ENCODE measurements at regions of chr20 and their contacts with region 1.

Region 1: DNA sequence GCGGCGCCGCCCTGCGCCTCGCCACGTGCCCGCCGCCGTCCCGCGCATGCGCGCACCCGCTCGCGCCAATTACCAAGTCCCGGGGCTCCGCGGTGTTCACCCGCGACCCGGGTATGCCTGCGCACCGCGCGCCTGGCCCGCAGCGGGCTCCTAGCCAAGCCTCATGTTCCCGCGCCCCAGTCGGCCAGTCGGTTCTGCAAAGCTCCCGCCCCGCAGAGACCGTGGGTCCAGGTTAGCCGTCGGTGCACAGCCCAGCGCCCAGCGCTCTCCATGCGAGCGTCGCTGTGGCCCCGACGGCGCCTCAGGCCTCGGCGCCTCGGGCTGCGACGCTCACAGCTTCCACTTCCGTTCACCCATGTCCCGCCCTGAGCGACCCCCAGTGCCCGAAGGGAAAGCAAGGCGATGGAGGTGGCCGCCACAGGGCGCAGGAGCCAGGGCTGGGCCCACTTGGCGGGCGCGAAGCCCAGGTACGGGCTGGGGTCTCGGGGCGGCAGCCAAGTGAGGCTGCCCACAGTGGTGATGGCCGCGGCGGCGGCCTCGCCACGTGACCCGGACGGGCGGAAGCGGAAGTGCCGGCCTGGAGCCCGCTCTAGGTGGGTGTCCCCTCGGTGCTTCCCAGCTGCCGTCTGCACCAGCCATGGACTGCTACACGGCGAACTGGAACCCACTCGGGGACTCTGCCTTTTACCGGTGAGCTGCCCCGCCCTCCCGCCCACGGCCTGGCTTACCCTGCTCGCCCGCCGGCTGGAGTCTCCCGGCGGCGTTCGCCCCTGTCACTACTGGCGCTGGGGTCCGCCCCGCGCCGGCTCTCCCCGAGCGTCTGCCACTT is at the starts of genes PCED1A and VPS16:
- DNase-seq: peak; percentile 78 to 95 (median 89)
- ATAC-seq: peak; percentile 92
- H3K4me3 ChIP-seq: peak within 1 kb of the TSS; percentile 88 to 97
- H3K4me3 Mint-ChIP-seq: peak within 1 kb of the TSS; percentile 82
- H3K27ac ChIP-seq: peak within 1 kb of the TSS; percentile 85 to 88
- H3K27ac Mint-ChIP-seq: peak within 1 kb of the TSS; percentile 89
- H3K4me1 ChIP-seq: peaks cover 22% of the 10 kb centered on the region
- H3K4me1 Mint-ChIP-seq: peaks cover 41% of the 10 kb centered on the region
- H3K27me3 ChIP-seq: no peaks in the 10 kb centered on the region
- H3K27me3 Mint-ChIP-seq: no peaks in the 10 kb centered on the region
- CTCF ChIP-seq: no peak
- total RNA-seq, gene PCED1A: 58.7 to 62.2 TPM
- total RNA-seq, gene VPS16: 40.7 to 41.1 TPM

Region 2: DNA sequence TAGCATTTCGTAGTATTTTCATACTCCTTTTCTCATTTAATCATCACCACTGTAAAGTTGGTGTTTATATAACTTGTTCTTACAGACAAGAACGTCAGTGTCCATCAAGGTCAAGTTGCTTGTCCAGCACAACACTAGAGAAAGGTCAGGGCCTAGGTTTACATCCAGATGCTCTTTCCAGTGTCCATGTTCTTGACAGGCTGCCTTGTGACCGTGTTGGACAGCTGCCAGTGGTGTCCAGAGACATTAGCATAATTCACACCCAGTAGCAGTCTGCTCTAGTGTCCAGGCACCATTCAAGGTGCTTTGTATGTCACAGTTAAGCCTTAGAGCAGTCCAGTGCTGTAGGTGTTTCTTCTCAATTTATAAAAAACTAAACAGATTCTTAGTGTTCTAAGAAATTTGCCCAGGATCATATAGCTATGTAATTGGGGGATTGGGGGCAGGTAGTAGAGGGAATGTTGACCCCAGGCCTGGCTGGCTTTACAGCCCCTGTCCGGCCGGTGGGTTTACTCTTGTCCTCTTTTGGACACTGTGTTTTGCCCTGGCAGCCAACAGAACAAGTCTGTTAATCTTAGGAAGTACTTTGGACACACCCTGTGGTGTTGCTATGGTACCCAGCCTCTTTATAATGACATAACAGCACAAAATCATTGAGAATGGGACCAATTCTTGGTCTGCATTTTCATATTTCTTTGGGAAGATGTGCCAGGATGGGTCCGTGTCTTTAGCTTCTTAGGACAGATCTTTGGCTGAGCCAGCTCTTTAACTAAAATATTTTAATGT is 730.7 kb before region 1 on chr20:
- CTCF ChIA-PET with region 1: no interaction called
- POLR2A ChIA-PET with region 1: no interaction called
- intact Hi-C with region 1: loop called in 1 of 2 experiments (anchors 5 kb)
- DNase-seq: peak in 1 of 9 experiments; percentile 45
- ATAC-seq: no peak
- H3K4me3 ChIP-seq: no peak overlapping the region
- H3K4me3 Mint-ChIP-seq: peak overlapping the region; percentile 24
- H3K27ac ChIP-seq: no peak overlapping the region
- H3K27ac Mint-ChIP-seq: no peak overlapping the region
- H3K4me1 ChIP-seq: peaks cover 74% of the 10 kb centered on the region
- H3K4me1 Mint-ChIP-seq: peaks cover 93% of the 10 kb centered on the region
- H3K27me3 ChIP-seq: no peaks in the 10 kb centered on the region
- H3K27me3 Mint-ChIP-seq: no peaks in the 10 kb centered on the region
- CTCF ChIP-seq: no peak

Region 3: DNA sequence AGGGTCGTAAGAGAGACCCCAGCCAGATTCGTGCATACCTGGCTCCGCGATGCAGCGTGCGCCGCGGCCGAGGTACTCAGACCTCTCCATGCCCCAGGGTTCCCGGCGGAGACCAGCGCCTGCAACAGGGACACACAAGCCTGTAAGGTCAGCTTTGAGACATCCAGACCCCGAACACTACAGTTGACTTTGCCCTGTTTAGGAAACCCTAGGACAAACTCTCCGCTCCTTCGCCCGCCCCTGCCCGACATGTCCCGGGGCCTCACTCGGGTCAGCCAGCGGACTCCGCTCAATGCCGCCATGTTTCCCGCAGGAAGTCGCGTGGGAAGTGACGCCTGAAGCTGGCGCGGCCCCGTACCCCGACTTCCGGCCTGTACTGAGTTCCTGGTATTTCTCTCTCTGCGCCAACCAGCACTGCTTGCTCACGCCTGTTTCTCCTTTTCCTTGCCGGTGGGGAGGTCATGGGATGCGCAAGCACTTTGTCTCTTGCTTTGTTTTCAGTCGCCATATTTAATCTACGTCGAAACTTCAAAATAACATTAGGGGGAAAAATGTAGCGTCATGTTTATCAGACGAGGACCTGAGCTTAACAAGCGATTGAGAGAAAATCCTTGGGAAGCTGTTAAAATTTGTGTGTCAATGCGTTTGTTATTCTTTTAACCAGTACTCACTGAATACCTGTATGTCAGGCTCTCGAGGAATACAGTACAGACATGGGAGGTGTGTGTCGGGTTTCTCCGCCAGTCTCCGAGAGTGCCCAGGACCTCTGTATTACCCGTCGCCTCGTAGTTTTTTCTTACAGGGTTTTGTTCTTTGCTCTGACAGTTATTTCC is 176.2 kb before region 1 on chr20 and contains the start of gene IDH3B:
- CTCF ChIA-PET with region 1: no interaction called
- POLR2A ChIA-PET with region 1: interaction called, 4 read pairs
- intact Hi-C with region 1: loop called (anchors 1 to 5 kb)
- DNase-seq: peak; percentile 80 to 95 (median 93)
- ATAC-seq: peak; percentile 98
- H3K4me3 ChIP-seq: peak within 1 kb of the TSS; percentile 74 to 83
- H3K4me3 Mint-ChIP-seq: peak within 1 kb of the TSS; percentile 94
- H3K27ac ChIP-seq: peak within 1 kb of the TSS; percentile 82 to 95
- H3K27ac Mint-ChIP-seq: peak within 1 kb of the TSS; percentile 97
- H3K4me1 ChIP-seq: peaks cover 12% of the 10 kb centered on the region
- H3K4me1 Mint-ChIP-seq: peaks cover 20% of the 10 kb centered on the region
- H3K27me3 ChIP-seq: no peaks in the 10 kb centered on the region
- H3K27me3 Mint-ChIP-seq: peaks cover 7% of the 10 kb centered on the region
- CTCF ChIP-seq: no peak
- total RNA-seq, gene IDH3B: 174 to 184 TPM

Region 4: GRCh38 chr20:3045816-3046676 is 205.7 kb after region 1 on chr20 and contains the start of gene MRPS26:
- CTCF ChIA-PET with region 1: no interaction called
- POLR2A ChIA-PET with region 1: no interaction called
- intact Hi-C with region 1: loop called in 1 of 2 experiments (anchors 2 kb)
- DNase-seq: peak; percentile 48 to 87 (median 76)
- ATAC-seq: peak; percentile 85
- H3K4me3 ChIP-seq: peak within 1 kb of the TSS; percentile 72 to 95
- H3K4me3 Mint-ChIP-seq: peak within 1 kb of the TSS; percentile 82
- H3K27ac ChIP-seq: peak within 1 kb of the TSS; percentile 66 to 71
- H3K27ac Mint-ChIP-seq: peak within 1 kb of the TSS; percentile 76
- H3K4me1 ChIP-seq: peaks cover 15% of the 10 kb centered on the region
- H3K4me1 Mint-ChIP-seq: peaks cover 19% of the 10 kb centered on the region
- H3K27me3 ChIP-seq: no peaks in the 10 kb centered on the region
- H3K27me3 Mint-ChIP-seq: no peaks in the 10 kb centered on the region
- CTCF ChIP-seq: no peak
- total RNA-seq, gene MRPS26: 16.5 to 19.5 TPM

Measured in CD8-positive, alpha-beta T cell (primary cell).